ENCODE measurements at regions of chr3 and their contacts with region 1.

Region 1: GRCh38 chr3:43286115-43286840 is at the start of gene SNRK:
- DNase-seq: peak; percentile 68 to 82 (median 78)
- H3K4me3 ChIP-seq: peak within 1 kb of the TSS; percentile 85 to 100 (median 92)
- H3K4me3 Mint-ChIP-seq: peak within 1 kb of the TSS; percentile 91 to 99
- H3K27ac ChIP-seq: peak within 1 kb of the TSS; percentile 50 to 92
- H3K27ac Mint-ChIP-seq: peak within 1 kb of the TSS; percentile 91 to 99 (median 97)
- H3K4me1 ChIP-seq: peaks cover 43 to 47% of the 10 kb centered on the region in 2 donors
- H3K4me1 Mint-ChIP-seq: peaks cover 36% of the 10 kb centered on the region
- H3K27me3 ChIP-seq: no peaks in the 10 kb centered on the region
- H3K27me3 Mint-ChIP-seq: no peaks in the 10 kb centered on the region
- CTCF ChIP-seq: peak; percentile 31
- polyA plus RNA-seq, gene SNRK: 12.8 to 19.7 (median 16.1) TPM

Region 2: GRCh38 chr3:43180027-43180426 is 106.3 kb before region 1 on chr3:
- intact Hi-C with region 1: loop called in 1 of 2 experiments (anchors 10 kb)
- DNase-seq: peak; percentile 76 to 92 (median 83)
- H3K4me3 ChIP-seq: peak overlapping the region in 2 of 3 experiments; percentile 10 to 55
- H3K4me3 Mint-ChIP-seq: peak overlapping the region; percentile 18 to 85
- H3K27ac ChIP-seq: peak overlapping the region; percentile 75 to 96
- H3K27ac Mint-ChIP-seq: peak overlapping the region; percentile 91 to 97 (median 95)
- H3K4me1 ChIP-seq: peaks cover 56 to 58% of the 10 kb centered on the region in 2 donors
- H3K4me1 Mint-ChIP-seq: peaks cover 70% of the 10 kb centered on the region
- H3K27me3 ChIP-seq: no peaks in the 10 kb centered on the region
- H3K27me3 Mint-ChIP-seq: peaks cover 0 to 5% (median 0%) of the 10 kb centered on the region in 3 donors
- CTCF ChIP-seq: no peak

Region 3: GRCh38 chr3:43256714-43257461 is 29.4 kb before region 1 on chr3:
- intact Hi-C with region 1: loop called in 1 of 2 experiments (anchors 5 kb)
- DNase-seq: peak; percentile 93 to 97 (median 96)
- H3K4me3 ChIP-seq: peak overlapping the region in 1 of 3 experiments; percentile 40
- H3K4me3 Mint-ChIP-seq: peak overlapping the region; percentile 39 to 79
- H3K27ac ChIP-seq: peak overlapping the region; percentile 61 to 87
- H3K27ac Mint-ChIP-seq: peak overlapping the region; percentile 86 to 99 (median 96)
- H3K4me1 ChIP-seq: peaks cover 43 to 47% of the 10 kb centered on the region in 2 donors
- H3K4me1 Mint-ChIP-seq: peaks cover 48% of the 10 kb centered on the region
- H3K27me3 ChIP-seq: no peaks in the 10 kb centered on the region
- H3K27me3 Mint-ChIP-seq: peaks cover 0 to 8% (median 2%) of the 10 kb centered on the region in 3 donors
- CTCF ChIP-seq: no peak